ENCODE measurements at regions of chr17 and their contacts with region 1.

Region 1: DNA sequence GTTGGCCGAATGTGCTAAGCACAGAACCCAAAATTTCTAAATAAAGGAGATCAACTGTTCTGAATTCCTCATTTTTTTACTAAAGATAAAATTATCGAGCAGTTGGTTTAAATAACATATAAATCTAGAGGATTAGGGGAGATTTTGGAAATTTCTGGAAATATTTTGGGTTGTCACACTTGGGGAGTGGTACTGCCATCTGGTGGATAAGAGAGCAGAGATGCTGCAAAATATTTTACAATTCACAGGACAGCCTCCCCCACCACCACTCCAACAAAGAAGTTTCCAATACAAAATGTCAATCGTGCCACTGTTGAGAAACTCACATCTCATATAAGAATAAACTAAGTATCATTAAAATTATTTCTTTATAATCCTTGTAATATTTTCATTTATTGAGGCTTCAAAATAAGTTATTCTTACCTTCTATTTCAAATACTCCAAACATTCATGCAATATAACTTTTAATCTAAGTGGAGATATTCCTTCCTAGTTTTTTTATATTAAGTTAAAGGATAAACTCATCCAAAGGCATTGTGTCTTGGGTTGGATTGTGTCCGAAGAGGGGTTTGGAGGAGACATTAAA is 17.0 kb upstream of the ABCA8 start:
- DNase-seq: peak; percentile 38
- H3K4me3 ChIP-seq: no peak overlapping the region
- H3K27ac ChIP-seq: no peak overlapping the region
- H3K4me1 ChIP-seq: no peaks in the 10 kb centered on the region
- H3K27me3 ChIP-seq: no peaks in the 10 kb centered on the region
- CTCF ChIP-seq: peak; percentile 75 to 82 (median 81)
- POLR2A ChIP-seq: no peak

Region 2: DNA sequence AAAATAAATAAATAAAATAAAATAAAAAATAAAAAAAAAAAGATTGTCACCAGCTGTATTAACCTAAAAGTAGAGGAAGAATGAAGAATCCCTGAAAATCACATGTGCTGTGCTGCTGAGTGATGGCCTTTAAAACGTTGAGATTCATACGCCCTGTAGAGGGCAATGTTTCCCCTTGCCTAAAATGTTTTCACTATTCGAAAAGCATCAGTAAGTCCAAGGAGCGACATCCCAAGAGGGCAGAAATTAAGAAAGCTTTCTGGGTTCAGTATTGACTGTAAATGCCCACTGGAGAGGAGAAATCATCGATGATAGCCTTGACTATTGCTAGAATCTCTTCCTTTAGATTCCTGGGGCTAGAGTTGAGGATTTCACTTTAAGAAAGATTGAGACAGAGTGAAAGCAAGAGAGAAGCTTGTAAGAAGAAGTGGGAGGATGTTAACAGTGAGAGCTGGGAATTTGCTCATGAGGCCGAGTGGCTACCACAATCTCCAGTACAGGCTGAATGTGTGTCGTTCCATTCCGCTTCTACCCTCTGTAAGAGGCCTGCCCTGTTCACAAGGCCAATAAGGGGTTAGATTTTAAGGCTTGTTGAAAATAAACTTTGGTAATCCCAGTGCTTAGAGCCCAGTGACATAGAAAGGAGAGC is 200.2 kb before region 1 on chr17:
- intact Hi-C with region 1: loop called (anchors 10 kb)
- DNase-seq: peak; percentile 57
- H3K4me3 ChIP-seq: no peak overlapping the region
- H3K27ac ChIP-seq: peak overlapping the region; percentile 59 to 71
- H3K4me1 ChIP-seq: peaks cover 6% of the 10 kb centered on the region
- H3K27me3 ChIP-seq: no peaks in the 10 kb centered on the region
- CTCF ChIP-seq: peak; percentile 67 to 85 (median 78)
- POLR2A ChIP-seq: no peak

Region 3: GRCh38 chr17:68909066-68909465 is 63.1 kb before region 1 on chr17:
- intact Hi-C with region 1: no loop called
- DNase-seq: peak; percentile 30
- H3K4me3 ChIP-seq: no peak overlapping the region
- H3K27ac ChIP-seq: peak overlapping the region in 1 of 2 donors; percentile 85
- H3K4me1 ChIP-seq: peaks cover 13% of the 10 kb centered on the region
- H3K27me3 ChIP-seq: no peaks in the 10 kb centered on the region
- CTCF ChIP-seq: no peak
- POLR2A ChIP-seq: no peak

Region 4: DNA sequence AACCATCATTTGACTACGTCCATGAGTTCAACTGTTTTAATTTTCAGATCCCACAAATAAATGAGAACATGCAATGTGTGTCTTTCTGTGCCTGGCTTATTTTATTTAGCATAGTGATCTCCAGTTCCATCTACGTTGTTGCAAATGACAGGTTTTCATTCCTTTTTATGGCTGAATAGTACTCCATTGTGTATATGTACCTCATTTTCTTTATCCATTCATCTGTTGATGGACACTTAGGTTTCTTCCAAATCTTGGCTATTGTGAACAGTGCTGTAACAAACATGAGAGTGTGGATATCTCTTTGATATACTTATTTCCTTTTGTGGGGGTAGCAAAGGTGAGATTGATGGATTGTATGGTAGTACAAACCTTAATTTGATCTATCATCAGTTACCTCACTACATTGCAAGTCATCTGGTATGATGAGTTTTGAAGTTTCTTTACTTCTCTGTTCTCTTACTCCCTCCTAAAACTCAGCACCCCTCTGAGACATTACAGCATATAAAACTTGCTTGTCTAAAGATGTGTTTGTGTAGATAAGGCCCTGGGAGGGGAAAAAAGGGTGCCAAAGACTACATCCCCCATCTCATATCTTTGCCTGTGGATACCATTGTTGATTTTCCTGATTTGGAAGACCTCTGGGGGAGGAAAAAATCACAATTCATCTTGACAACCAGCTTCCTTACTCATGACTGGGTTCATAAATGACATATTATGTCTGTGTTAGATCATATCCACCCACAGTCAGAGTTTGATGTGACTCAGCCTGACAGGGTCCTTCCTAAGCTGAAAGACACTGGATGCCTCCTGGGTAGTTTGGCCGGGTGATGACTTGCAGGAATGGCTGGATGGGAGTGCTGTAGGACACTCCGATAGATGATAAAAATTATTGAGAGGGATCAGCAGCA is 40.9 kb after region 1 on chr17:
- intact Hi-C with region 1: no loop called
- DNase-seq: no peak
- H3K4me3 ChIP-seq: no peak overlapping the region
- H3K27ac ChIP-seq: no peak overlapping the region
- H3K4me1 ChIP-seq: no peaks in the 10 kb centered on the region
- H3K27me3 ChIP-seq: no peaks in the 10 kb centered on the region
- CTCF ChIP-seq: no peak
- POLR2A ChIP-seq: no peak